CD4-positive, alpha-beta memory T cell (primary cell): ENCODE measurements at regions of chr11 and their contacts with region 1.

Region 1: DNA sequence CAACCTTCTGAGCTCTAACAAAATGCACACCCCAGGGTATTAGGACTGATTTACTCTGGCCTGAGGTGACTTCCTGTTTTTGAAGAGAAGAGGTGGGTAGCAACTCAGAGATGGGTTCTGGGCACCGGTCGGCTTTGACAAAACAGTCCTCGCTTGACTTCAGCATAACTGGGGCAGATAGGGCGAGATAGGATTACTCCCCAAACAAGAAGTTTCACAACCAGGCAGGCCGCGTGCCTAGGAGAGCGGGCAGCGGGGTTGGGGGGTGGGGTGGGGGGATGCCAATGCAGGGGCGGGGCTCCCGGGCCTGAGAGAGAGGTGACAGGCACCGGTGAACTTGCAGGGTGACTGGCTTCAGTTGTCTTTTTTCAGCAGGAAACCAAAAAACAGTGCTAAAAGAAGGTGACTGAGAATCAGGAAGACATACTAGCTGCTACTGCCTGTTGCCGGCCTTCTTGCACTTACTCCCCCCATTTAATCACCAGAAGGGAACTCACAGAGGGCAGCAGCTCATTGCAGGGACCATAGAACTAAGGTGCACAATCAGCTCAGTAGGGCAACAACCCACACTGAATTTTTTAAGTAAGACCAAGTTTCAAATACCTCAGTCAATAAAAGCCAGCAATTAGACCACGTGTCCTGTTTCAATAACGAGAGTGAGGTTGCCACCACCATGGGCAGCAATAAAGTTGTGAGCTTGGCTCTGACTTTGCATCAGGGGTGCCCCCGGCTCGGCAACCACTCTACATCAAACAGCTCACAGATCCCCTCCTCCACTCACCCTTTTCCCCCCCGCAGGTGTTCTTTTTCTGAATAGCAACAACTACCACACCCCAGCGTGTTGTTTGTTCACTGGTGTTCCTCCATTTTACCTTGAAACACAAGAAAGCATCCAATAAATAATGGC is 37.2 kb upstream of the ETS1 start:
- DNase-seq: peak; percentile 69 to 83 (median 77)
- H3K4me3 ChIP-seq: peak overlapping the region in 1 of 2 donors; percentile 28
- H3K4me3 Mint-ChIP-seq: peak overlapping the region; percentile 67 to 91 (median 80)
- H3K27ac ChIP-seq: peak overlapping the region; percentile 67
- H3K27ac Mint-ChIP-seq: peak overlapping the region; percentile 96 to 98 (median 97)
- H3K4me1 ChIP-seq: peaks cover 85% of the 10 kb centered on the region
- H3K4me1 Mint-ChIP-seq: peaks cover 76 to 100% (median 89%) of the 10 kb centered on the region in 4 donors
- H3K27me3 ChIP-seq: no peaks in the 10 kb centered on the region
- H3K27me3 Mint-ChIP-seq: no peaks in the 10 kb centered on the region

Region 2: GRCh38 chr11:128302425-128303186 is 321.9 kb before region 1 on chr11:
- CTCF ChIA-PET with region 1: interaction called, 14 read pairs
- POLR2A ChIA-PET with region 1: interaction called, 49 read pairs
- intact Hi-C with region 1: no loop called
- DNase-seq: peak; percentile 88 to 96 (median 94)
- H3K4me3 ChIP-seq: peak overlapping the region; percentile 54 to 77
- H3K4me3 Mint-ChIP-seq: peak overlapping the region; percentile 90 to 95 (median 92)
- H3K27ac ChIP-seq: peak overlapping the region; percentile 93
- H3K27ac Mint-ChIP-seq: peak overlapping the region; percentile 95 to 100 (median 98)
- H3K4me1 ChIP-seq: peaks cover 98% of the 10 kb centered on the region
- H3K4me1 Mint-ChIP-seq: peaks cover 72 to 97% (median 86%) of the 10 kb centered on the region in 4 donors
- H3K27me3 ChIP-seq: no peaks in the 10 kb centered on the region
- H3K27me3 Mint-ChIP-seq: no peaks in the 10 kb centered on the region

Region 3: DNA sequence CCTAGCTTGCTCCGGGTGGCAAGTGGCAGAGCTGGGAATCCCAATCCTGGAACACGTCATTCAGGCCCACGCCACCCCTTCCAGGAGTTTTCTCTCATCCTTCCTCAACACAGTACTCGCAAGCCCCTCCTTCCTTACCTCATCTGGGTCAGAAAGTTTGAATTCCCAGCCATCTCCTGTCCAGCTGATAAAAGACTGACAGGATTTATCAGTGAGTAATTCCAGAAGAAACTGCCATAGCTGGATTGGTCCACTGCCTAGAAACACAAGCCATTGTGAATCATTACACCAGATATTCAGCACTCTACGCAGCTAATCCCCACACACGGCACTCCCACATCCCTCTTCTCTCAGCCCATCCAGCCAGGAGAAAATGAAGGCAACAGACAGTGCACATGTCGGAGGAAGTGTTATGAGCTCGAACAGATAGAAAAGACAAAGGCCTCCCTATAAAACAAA is 161.1 kb before region 1 on chr11:
- CTCF ChIA-PET with region 1: interaction called, 31 read pairs
- POLR2A ChIA-PET with region 1: interaction called, 62 read pairs
- intact Hi-C with region 1: no loop called
- DNase-seq: no peak
- H3K4me3 ChIP-seq: peak overlapping the region in 1 of 2 donors; percentile 3
- H3K4me3 Mint-ChIP-seq: peak overlapping the region; percentile 26 to 93 (median 78)
- H3K27ac ChIP-seq: peak overlapping the region; percentile 94
- H3K27ac Mint-ChIP-seq: peak overlapping the region; percentile 98 to 99 (median 99)
- H3K4me1 ChIP-seq: peaks cover 93% of the 10 kb centered on the region
- H3K4me1 Mint-ChIP-seq: peaks cover 76 to 95% (median 86%) of the 10 kb centered on the region in 4 donors
- H3K27me3 ChIP-seq: no peaks in the 10 kb centered on the region
- H3K27me3 Mint-ChIP-seq: no peaks in the 10 kb centered on the region

Region 4: DNA sequence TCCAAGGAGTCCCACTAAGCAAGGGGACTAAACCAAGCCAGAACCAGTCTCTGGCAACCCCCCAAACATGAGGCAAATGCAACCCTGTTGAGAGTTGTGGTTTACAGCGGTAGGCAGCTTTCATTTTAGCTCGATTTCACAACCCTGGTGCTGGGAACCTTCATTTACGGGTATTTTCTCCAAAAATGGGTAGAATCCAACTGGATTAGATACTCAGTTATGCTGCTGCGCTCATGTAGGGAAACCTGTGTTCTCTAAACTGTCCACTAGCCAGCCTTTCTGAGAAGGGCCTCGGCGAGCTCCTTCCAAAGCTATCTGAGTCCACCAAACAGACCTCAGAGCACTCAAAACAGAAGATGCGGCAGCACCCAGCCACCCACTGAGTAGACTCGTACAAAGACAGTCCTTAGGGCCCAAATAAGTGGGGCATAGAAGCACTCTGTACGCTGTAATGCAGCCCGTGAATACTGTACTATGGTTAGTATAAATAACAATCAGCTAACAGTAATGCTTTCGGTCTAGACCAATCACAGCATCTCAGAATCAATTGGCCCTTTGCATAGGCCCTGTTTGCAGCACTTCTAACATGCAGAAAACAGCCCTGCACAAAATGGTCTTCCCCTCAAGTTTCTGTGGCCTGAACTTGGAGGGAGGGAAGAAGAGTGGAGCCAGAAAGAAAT is 141.9 kb before region 1 on chr11:
- CTCF ChIA-PET with region 1: interaction called, 9 read pairs
- POLR2A ChIA-PET with region 1: interaction called, 10 read pairs
- intact Hi-C with region 1: no loop called
- DNase-seq: peak; percentile 68 to 88 (median 72)
- H3K4me3 ChIP-seq: peak overlapping the region; percentile 27 to 47
- H3K4me3 Mint-ChIP-seq: peak overlapping the region; percentile 73 to 92 (median 81)
- H3K27ac ChIP-seq: peak overlapping the region; percentile 94
- H3K27ac Mint-ChIP-seq: peak overlapping the region; percentile 88 to 99 (median 99)
- H3K4me1 ChIP-seq: peaks cover 99% of the 10 kb centered on the region
- H3K4me1 Mint-ChIP-seq: peaks cover 86 to 98% (median 93%) of the 10 kb centered on the region in 4 donors
- H3K27me3 ChIP-seq: no peaks in the 10 kb centered on the region
- H3K27me3 Mint-ChIP-seq: no peaks in the 10 kb centered on the region

Region 5: GRCh38 chr11:128552783-128553661 is 71.5 kb before region 1 on chr11:
- CTCF ChIA-PET with region 1: interaction called, 19 read pairs
- POLR2A ChIA-PET with region 1: interaction called, 6 read pairs
- intact Hi-C with region 1: loop called (anchors 2 kb)
- DNase-seq: peak in 4 of 5 donors; percentile 16 to 41 (median 30)
- H3K4me3 ChIP-seq: no peak overlapping the region
- H3K4me3 Mint-ChIP-seq: peak overlapping the region; percentile 45 to 69 (median 64)
- H3K27ac ChIP-seq: peak overlapping the region; percentile 28
- H3K27ac Mint-ChIP-seq: peak overlapping the region; percentile 73 to 94 (median 87)
- H3K4me1 ChIP-seq: peaks cover 59% of the 10 kb centered on the region
- H3K4me1 Mint-ChIP-seq: peaks cover 42 to 62% (median 50%) of the 10 kb centered on the region in 4 donors
- H3K27me3 ChIP-seq: no peaks in the 10 kb centered on the region
- H3K27me3 Mint-ChIP-seq: no peaks in the 10 kb centered on the region

Region 6: GRCh38 chr11:128610721-128611617 is 13.6 kb before region 1 on chr11:
- CTCF ChIA-PET with region 1: interaction called, 89 read pairs
- POLR2A ChIA-PET with region 1: interaction called, 130 read pairs
- intact Hi-C with region 1: loop called (anchors 2 kb)
- DNase-seq: peak; percentile 52 to 67 (median 59)
- H3K4me3 ChIP-seq: peak overlapping the region; percentile 3 to 21
- H3K4me3 Mint-ChIP-seq: peak overlapping the region; percentile 42 to 84 (median 68)
- H3K27ac ChIP-seq: peak overlapping the region; percentile 45
- H3K27ac Mint-ChIP-seq: peak overlapping the region; percentile 80 to 96 (median 92)
- H3K4me1 ChIP-seq: peaks cover 44% of the 10 kb centered on the region
- H3K4me1 Mint-ChIP-seq: peaks cover 31 to 42% (median 38%) of the 10 kb centered on the region in 4 donors
- H3K27me3 ChIP-seq: no peaks in the 10 kb centered on the region
- H3K27me3 Mint-ChIP-seq: no peaks in the 10 kb centered on the region